ENCODE measurements at regions of chr7 and their contacts with region 1.

Region 1: DNA sequence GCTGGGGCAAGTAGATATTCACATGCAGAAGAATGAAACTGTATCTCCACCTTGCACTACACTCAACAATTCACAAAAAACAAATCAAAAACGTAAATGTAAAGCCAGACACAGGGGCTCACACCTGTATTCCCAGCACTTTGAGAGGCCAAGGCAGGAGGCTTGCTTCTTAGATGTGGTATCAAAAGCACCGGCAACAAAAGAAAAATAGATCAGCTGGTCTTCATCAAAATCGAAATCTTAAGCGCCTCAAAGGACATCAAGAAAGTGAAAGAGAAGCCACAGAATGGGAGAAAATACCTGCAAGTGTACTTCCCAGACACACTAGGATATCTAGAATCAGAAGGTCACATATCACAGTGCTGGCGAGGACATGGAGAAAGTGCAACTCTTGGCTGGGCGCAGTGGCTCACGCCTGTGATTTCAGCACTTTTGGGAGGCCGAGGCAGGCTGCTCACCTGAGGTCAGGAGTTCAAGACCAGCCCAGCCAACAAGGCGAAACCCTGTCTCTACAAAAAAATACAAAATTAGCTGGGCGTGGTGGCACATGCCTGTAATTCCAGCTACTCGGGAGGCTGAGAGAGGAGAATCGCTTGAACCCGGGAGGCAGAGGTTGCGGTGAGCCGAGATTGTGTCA is 31.4 kb downstream of the GPER1 start:
- DNase-seq: no peak
- ATAC-seq: no peak
- H3K4me3 ChIP-seq: no peak overlapping the region
- H3K4me3 Mint-ChIP-seq: no peak overlapping the region
- H3K27ac ChIP-seq: no peak overlapping the region
- H3K27ac Mint-ChIP-seq: no peak overlapping the region
- H3K4me1 ChIP-seq: peaks cover 7 to 10% of the 10 kb centered on the region in 2 donors
- H3K4me1 Mint-ChIP-seq: peaks cover 5% of the 10 kb centered on the region
- H3K27me3 ChIP-seq: no peaks in the 10 kb centered on the region
- H3K27me3 Mint-ChIP-seq: no peaks in the 10 kb centered on the region
- CTCF ChIP-seq: no peak

Region 2: DNA sequence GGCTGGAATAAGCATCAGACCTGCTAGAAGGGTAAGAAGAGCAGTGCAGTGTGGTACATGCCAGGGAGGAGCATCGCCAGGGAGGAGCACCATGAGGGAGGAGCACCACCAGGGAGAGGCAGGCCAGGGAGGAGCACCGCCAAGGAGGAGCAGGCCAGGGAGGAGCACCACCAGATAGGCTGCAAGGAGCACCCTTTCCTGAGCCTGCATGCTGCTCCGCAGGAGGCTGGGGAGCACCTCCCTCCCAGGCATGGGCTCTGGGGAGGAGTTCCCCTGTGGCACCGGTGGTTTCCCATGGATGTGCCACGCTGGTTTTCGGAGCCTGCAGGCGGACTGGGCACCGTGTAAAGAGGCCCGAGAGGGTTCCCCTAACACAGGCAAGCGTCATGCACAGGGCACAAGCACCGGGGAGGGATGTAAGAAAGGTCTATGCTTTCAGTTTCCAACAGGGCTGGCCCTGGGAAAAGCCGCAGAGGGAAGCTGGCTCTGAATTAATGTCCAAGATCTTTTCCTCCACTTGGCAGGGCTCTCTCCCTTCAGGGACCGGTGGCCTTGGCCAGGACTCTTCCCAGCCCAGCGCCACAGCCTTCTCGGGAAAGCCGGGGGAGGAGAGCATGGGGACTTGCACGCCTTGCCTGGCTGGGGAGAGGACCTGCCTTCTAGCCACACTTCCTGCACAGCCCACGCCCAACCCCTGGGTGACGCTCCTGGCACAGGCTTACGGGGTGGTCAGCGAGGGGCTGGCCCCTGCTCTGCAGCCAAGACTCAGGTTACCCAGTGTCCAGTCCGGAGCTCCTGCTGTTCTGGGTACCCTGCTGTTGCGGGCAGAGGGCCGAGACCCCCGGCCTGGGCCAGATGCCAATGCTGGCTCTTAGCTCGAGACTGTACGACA is 42.9 kb before region 1 on chr7:
- CTCF ChIA-PET with region 1: no interaction called
- POLR2A ChIA-PET with region 1: no interaction called
- intact Hi-C with region 1: no loop called
- DNase-seq: no peak
- ATAC-seq: no peak
- H3K4me3 ChIP-seq: no peak overlapping the region
- H3K4me3 Mint-ChIP-seq: no peak overlapping the region
- H3K27ac ChIP-seq: no peak overlapping the region
- H3K27ac Mint-ChIP-seq: no peak overlapping the region
- H3K4me1 ChIP-seq: no peaks in the 10 kb centered on the region
- H3K4me1 Mint-ChIP-seq: peaks cover 3% of the 10 kb centered on the region
- H3K27me3 ChIP-seq: no peaks in the 10 kb centered on the region
- H3K27me3 Mint-ChIP-seq: peaks cover 3% of the 10 kb centered on the region
- CTCF ChIP-seq: no peak

Region 3: GRCh38 chr7:1103009-1103788 is 16.1 kb before region 1 on chr7:
- CTCF ChIA-PET with region 1: no interaction called
- POLR2A ChIA-PET with region 1: interaction called, 3 read pairs
- intact Hi-C with region 1: loop called (anchors 2 kb)
- DNase-seq: peak; percentile 51
- ATAC-seq: peak; percentile 28
- H3K4me3 ChIP-seq: peak overlapping the region in 3 of 5 experiments; percentile 0 to 39 (median 20)
- H3K4me3 Mint-ChIP-seq: peak overlapping the region; percentile 84
- H3K27ac ChIP-seq: no peak overlapping the region
- H3K27ac Mint-ChIP-seq: no peak overlapping the region
- H3K4me1 ChIP-seq: peaks cover 7 to 31% of the 10 kb centered on the region in 2 donors
- H3K4me1 Mint-ChIP-seq: peaks cover 35% of the 10 kb centered on the region
- H3K27me3 ChIP-seq: peaks cover 0 to 6% (median 3%) of the 10 kb centered on the region in 4 experiments
- H3K27me3 Mint-ChIP-seq: peaks cover 7% of the 10 kb centered on the region
- CTCF ChIP-seq: no peak